ENCODE measurements at regions of chr1 and their contacts with region 1.

Region 1: DNA sequence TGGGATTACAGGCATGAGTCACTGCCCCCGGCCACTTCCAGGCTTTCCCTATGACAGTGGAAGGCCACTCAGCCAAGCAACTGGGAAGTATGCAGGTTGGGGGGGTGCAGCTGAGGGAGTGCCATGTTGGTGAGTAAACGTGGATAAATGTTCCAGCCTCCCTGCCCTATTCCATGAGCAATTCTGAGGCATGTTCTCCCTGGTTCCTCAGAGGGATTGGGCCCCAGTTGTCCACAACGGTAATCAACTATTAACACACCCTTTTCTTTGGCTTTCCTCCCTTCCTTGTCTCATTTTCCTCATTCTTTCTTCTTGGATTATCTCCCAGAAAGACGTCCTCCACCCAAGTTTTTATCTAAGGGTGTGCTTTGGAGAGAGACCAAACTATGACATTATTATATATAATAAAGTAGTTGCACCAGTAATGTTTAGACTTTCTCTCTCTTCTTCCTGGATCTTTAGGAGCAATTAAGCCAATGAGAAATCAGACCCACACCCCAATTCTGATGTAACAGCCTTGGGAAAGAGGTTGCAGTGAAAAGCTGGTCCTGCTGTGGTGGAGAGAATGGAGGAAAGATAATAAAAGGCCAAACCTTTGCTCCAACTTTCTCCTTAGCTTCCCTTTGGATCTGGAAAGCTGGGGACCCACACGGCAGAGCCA is 6.8 kb upstream of the SLAMF9 start:
- DNase-seq: peak; percentile 85
- ATAC-seq: peak; percentile 91
- H3K4me3 ChIP-seq: no peak overlapping the region
- H3K27ac ChIP-seq: peak overlapping the region; percentile 61
- H3K4me1 ChIP-seq: peaks cover 23% of the 10 kb centered on the region
- H3K27me3 ChIP-seq: no peaks in the 10 kb centered on the region
- CTCF ChIP-seq: no peak

Region 2: DNA sequence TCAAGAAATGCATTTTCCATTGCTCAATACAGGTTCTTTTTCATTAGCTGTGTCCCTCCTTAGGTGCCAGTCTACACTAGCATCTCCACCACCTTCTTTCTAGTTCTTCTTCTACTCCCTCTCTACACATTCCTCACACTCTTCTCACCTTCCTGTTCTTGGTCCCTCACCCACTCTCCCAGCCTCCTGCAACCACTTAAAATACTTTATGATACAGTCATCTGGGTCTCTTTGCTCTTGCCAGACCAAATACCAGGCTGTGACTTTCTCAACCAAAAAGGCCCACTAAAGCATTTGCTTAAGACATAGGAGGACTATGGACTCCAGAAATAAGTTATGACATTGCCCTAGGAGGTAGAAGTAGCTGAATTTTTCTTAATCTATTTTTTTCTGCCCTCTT is 35.8 kb after region 1 on chr1:
- CTCF ChIA-PET with region 1: no interaction called
- POLR2A ChIA-PET with region 1: no interaction called
- intact Hi-C with region 1: loop called (anchors 2 kb)
- DNase-seq: peak; percentile 90
- ATAC-seq: peak; percentile 91
- H3K4me3 ChIP-seq: no peak overlapping the region
- H3K27ac ChIP-seq: no peak overlapping the region
- H3K4me1 ChIP-seq: peaks cover 33% of the 10 kb centered on the region
- H3K27me3 ChIP-seq: no peaks in the 10 kb centered on the region
- CTCF ChIP-seq: no peak

Region 3: DNA sequence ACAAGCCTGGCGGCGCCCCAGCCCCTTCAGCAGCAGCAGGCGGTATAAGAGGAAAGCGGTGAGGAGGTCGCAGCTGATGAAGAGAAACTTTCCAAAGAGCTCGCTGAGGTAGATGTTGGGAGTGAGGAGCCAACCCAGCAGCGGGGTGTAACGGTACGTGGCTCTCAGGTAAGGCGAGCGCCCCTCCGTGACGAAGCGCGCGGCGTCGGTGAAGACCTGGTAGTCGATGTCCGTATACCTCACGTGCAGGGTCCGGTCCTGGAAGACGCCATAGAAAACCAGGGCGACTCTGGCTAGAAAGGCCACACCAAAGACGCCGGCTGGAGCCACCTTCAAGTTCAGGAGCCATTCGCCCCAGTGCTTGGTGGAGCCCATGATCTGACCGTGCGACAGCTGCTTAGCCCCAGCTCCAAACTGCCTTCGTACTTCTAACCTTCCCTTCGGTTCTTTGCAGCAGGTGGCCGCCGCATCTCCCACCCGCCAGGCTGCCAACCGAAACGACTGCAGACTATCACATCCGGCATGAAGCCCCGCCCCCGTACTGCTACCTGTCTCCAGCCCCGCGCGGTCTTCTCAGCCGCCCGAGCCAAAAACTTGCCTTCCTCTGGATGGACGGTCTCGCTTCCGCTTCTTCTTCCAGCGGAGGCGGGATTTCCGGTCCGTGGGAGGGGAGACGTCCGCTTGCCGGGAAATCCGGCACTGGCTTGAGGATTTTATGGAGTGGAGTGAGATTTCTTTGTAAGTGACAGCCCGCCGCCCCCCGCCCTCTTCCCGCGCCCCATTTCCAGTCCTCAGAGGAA is 70.7 kb after region 1 on chr1 and contains the start of gene PIGM:
- CTCF ChIA-PET with region 1: no interaction called
- POLR2A ChIA-PET with region 1: no interaction called
- intact Hi-C with region 1: loop called (anchors 1 kb)
- DNase-seq: peak; percentile 99
- ATAC-seq: peak; percentile 95
- H3K4me3 ChIP-seq: peak within 1 kb of the TSS; percentile 80
- H3K27ac ChIP-seq: peak within 1 kb of the TSS; percentile 7; the same call in 1 of the 2 replicates
- H3K4me1 ChIP-seq: peaks cover 26% of the 10 kb centered on the region
- H3K27me3 ChIP-seq: no peaks in the 10 kb centered on the region
- CTCF ChIP-seq: 0 out of 2 replicates have a peak, but pooled peaks have one; percentile 18
- total RNA-seq, gene PIGM: 6.7 and 6.9 TPM in 2 replicates

Measured in PC-3 (cell line).